H1 (cell line): ENCODE measurements at regions of chr1 and their contacts with region 1.

Region 1: DNA sequence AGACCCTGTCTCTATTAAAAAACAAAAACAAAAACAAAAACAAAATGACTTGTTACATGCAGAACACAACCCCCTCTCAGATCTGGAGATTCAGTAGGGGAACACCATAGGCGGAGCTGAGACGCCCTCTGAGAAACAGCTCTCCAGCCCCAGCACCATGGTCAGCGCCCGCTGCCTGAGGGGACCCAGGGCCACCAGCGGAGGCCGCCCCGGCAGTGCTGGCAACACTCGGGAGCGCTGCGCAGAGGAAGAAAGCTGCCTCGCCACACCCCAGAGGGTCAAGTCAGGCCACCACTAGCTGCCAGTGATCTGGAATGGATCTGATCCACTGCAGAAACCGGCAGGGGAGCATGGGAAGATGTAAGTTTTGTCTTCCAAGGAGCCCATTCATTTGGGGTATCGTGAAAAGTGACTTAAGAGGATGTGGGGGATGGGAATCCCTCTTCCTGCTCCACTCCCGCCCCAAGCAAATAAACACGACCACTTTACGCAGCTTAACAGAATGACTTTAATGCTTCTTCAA is 3.1 kb downstream of the ACTA1 start:
- DNase-seq: peak; percentile 53 to 95
- H3K4me3 ChIP-seq: peak overlapping the region in 3 of 4 experiments; percentile 15 to 43 (median 23); a peak in 4 of 8 replicates
- H3K27ac ChIP-seq: no peak overlapping the region
- H3K4me1 ChIP-seq: peaks cover 0 to 18% (median 10%) of the 10 kb centered on the region in 4 experiments; a peak in 6 of 7 replicates
- H3K27me3 ChIP-seq: peaks cover 35 to 60% (median 56%) of the 10 kb centered on the region in 4 experiments
- CTCF ChIP-seq: peak; percentile 0 to 25 (median 2); a peak in 3 of 4 replicates
- EP300 ChIP-seq: no peak
- POLR2A ChIP-seq: no peak
- RAD21 ChIP-seq: peak; percentile 29 to 53; a peak in 3 of 4 replicates

Region 2: GRCh38 chr1:229221104-229222019 is 209.5 kb before region 1 on chr1:
- CTCF ChIA-PET with region 1: no interaction called
- POLR2A ChIA-PET with region 1: no interaction called
- DNase-seq: peak in 1 of 2 experiments; percentile 34
- H3K4me3 ChIP-seq: no peak overlapping the region
- H3K27ac ChIP-seq: no peak overlapping the region
- H3K4me1 ChIP-seq: peaks cover 0 to 6% (median 2%) of the 10 kb centered on the region in 4 experiments; a peak in 4 of 7 replicates
- H3K27me3 ChIP-seq: no peaks in the 10 kb centered on the region
- CTCF ChIP-seq: no peak
- EP300 ChIP-seq: no peak
- POLR2A ChIP-seq: no peak
- RAD21 ChIP-seq: no peak

Region 3: DNA sequence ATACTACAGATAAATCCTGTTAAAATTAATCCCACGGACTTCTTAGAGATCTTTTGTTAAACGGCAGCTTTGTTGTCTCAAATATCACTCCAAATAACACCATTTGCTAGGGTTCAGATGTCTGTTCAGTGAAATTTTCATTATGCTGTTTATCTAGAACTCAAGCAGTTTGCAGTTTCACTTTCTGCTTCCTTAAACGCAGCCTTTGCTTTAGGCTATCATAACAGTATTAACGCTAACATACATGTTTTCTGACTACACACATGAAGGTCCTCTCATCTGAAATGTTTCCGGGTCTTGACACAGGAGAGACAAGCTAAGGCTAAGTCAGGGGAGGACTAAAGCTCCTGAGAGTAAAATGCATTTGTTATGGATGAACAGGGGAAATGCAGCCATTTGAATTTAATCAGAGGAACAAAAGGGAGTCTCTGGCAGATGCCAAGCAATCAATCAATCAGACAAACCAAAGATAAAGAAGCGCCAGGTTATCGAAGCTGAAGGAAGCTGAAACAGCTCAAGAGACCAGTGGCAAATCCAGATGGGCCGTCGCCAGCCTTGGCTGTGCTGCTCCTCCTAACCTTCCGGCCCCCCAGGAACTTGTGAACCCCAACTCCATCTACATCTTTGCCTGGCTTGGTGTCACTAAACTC is 104.8 kb before region 1 on chr1:
- CTCF ChIA-PET with region 1: no interaction called
- POLR2A ChIA-PET with region 1: no interaction called
- DNase-seq: no peak
- H3K4me3 ChIP-seq: no peak overlapping the region
- H3K27ac ChIP-seq: no peak overlapping the region
- H3K4me1 ChIP-seq: 0 out of 7 replicates have a peak, but pooled peaks cover 0 to 3% (median 0%) of the 10 kb centered on the region in 4 experiments
- H3K27me3 ChIP-seq: no peaks in the 10 kb centered on the region
- CTCF ChIP-seq: no peak
- EP300 ChIP-seq: no peak
- POLR2A ChIP-seq: no peak
- RAD21 ChIP-seq: no peak

Region 4: DNA sequence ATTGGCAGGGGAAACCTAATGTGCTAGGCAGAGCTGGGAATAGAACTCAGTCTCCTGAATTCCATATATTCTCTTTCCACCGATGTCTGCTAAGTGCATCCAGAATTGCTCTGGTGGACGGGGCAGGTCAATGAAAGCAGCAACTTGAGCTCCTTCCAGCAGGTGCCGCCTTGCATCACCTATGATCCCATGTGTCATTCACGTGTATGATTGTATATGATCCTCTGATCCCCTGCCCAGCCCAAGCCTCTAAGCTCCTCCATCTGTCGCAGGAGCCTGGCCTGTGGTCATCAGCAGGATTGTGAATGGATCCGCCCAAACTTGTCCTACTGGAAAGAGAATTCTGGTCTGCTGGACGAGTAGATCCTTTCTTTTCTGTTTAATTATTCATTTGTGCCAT is 10.1 kb before region 1 on chr1:
- CTCF ChIA-PET with region 1: interaction called, 16 read pairs
- POLR2A ChIA-PET with region 1: interaction called, 25 read pairs
- DNase-seq: no peak
- H3K4me3 ChIP-seq: no peak overlapping the region
- H3K27ac ChIP-seq: no peak overlapping the region
- H3K4me1 ChIP-seq: peaks cover 0 to 4% (median 0%) of the 10 kb centered on the region in 4 experiments; a peak in 1 of 7 replicates
- H3K27me3 ChIP-seq: no peaks in the 10 kb centered on the region
- CTCF ChIP-seq: peak in 2 of 3 experiments; percentile 11 to 32; a peak in 2 of 4 replicates
- EP300 ChIP-seq: no peak
- POLR2A ChIP-seq: no peak
- RAD21 ChIP-seq: 0 out of 4 replicates have a peak, but pooled peaks of 1 of the 2 experiments have one; percentile 8